Activated CD8-positive, alpha-beta T cell treated with anti-CD3 and anti-CD28 coated beads for 36 hours (primary cell): ENCODE measurements at regions of chrX and their contacts with region 1.

Region 1: GRCh38 chrX:19887911-19888879 is 795 bp upstream of the SH3KBP1 start:
- DNase-seq: peak; percentile 51
- ATAC-seq: peak; percentile 41
- H3K4me3 Mint-ChIP-seq: peak overlapping the region; percentile 71
- H3K27ac Mint-ChIP-seq: peak overlapping the region; percentile 83
- H3K4me1 Mint-ChIP-seq: peaks cover 40% of the 10 kb centered on the region
- H3K27me3 Mint-ChIP-seq: no peaks in the 10 kb centered on the region
- CTCF ChIP-seq: no peak

Region 2: DNA sequence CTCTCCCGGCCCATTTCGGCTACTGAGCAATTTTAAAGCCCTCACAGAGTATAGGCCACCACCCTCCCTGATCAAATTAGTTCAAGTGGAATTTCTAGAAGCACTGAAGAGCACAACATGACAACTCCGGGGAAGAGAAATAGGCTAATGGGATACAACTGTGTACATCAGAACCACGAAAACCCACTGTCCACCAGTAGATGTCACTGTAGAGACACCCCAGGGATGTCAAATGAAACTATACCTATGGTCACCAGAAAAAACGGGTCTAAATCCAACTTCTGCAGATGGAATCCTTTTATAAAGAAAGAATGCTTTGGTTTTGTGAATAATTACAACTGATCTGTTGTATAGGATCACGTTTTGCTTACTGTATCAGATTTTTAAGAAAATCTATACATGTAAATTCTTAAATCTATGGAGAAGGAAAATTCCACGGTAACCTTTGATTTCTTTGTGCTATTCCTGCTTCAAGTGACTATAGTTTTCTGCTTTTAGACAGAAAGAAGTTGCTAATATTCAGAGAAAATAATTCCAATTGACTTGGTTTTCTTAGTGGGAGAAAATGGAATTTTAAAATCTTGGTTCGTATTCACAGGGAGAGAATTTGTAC is 343.4 kb before region 1 on chrX:
- CTCF ChIA-PET with region 1: no interaction called
- POLR2A ChIA-PET with region 1: no interaction called
- intact Hi-C with region 1: loop called (anchors 10 kb)
- DNase-seq: peak; percentile 62
- ATAC-seq: peak; percentile 66
- H3K4me3 Mint-ChIP-seq: no peak overlapping the region
- H3K27ac Mint-ChIP-seq: peak overlapping the region; percentile 36
- H3K4me1 Mint-ChIP-seq: peaks cover 31% of the 10 kb centered on the region
- H3K27me3 Mint-ChIP-seq: no peaks in the 10 kb centered on the region
- CTCF ChIP-seq: peak; percentile 60

Region 3: DNA sequence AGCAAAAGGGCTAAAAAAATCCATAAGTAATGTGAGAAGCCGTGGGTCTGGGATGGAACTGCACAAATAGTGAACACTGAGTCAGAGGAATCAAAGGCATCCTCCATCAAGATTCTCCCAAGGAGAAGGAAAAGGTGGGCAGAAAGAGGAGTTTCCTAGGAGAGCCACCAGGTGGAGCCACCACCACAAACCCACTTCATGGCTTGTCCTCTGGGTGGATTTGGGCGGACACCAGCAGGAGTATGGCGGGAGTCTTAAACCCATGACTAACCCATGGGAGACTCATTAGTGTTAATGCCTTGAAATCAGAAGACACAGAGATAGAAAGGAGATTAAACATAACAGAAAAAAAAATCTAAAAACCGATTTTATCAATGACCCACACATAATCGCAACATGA is 148.5 kb before region 1 on chrX:
- CTCF ChIA-PET with region 1: interaction called, 4 read pairs
- POLR2A ChIA-PET with region 1: no interaction called
- intact Hi-C with region 1: loop called (anchors 5 kb)
- DNase-seq: peak; percentile 47
- ATAC-seq: peak; percentile 40
- H3K4me3 Mint-ChIP-seq: no peak overlapping the region
- H3K27ac Mint-ChIP-seq: peak overlapping the region; percentile 85
- H3K4me1 Mint-ChIP-seq: peaks cover 75% of the 10 kb centered on the region
- H3K27me3 Mint-ChIP-seq: no peaks in the 10 kb centered on the region
- CTCF ChIP-seq: peak; percentile 58

Region 4: DNA sequence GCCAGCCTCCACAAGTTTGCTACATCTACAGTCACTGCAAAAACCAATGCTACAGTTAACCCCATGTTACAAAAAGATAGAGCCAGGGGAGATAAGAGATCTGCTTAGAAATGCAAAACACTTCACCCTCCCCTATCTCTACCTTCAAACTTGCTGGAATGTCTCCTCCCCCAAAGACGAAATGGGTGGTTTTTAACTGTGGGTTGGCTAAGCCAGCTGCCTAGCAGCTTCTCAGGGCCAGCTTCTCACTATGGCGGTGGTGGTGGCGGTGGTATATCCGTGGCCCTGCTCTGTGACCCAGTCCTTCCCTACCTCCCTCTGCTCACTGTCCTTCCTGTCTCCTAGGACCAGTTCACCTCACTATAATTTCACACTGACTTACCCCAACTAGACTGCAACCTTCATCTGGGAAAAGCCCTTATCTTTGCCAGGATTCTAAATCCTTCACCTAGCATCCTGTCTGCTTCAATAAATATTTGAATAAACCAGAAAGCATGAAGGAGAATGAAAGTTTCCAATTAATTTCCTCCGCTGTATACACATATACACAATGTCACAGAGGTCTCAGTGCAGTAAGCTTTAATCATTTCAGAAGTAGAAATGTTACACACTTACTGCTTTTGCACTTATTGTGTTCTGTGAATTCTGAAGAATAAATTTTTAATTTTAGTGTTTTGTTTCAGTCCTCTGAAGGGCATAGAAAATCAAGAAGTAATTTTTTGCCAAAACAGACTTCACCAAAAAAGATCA is 47.1 kb before region 1 on chrX:
- CTCF ChIA-PET with region 1: interaction called, 3 read pairs
- POLR2A ChIA-PET with region 1: no interaction called
- intact Hi-C with region 1: loop called (anchors 5 kb)
- DNase-seq: peak; percentile 37
- ATAC-seq: peak; percentile 38
- H3K4me3 Mint-ChIP-seq: peak overlapping the region; percentile 47
- H3K27ac Mint-ChIP-seq: peak overlapping the region; percentile 90
- H3K4me1 Mint-ChIP-seq: peaks cover 70% of the 10 kb centered on the region
- H3K27me3 Mint-ChIP-seq: no peaks in the 10 kb centered on the region
- CTCF ChIP-seq: no peak

Region 5: GRCh38 chrX:19931146-19931545 is 43.0 kb after region 1 on chrX:
- CTCF ChIA-PET with region 1: no interaction called
- POLR2A ChIA-PET with region 1: no interaction called
- intact Hi-C with region 1: no loop called
- DNase-seq: no peak
- ATAC-seq: no peak
- H3K4me3 Mint-ChIP-seq: no peak overlapping the region
- H3K27ac Mint-ChIP-seq: no peak overlapping the region
- H3K4me1 Mint-ChIP-seq: no peaks in the 10 kb centered on the region
- H3K27me3 Mint-ChIP-seq: no peaks in the 10 kb centered on the region
- CTCF ChIP-seq: no peak

Region 6: GRCh38 chrX:20001588-20001987 is 113.4 kb after region 1 on chrX:
- CTCF ChIA-PET with region 1: no interaction called
- POLR2A ChIA-PET with region 1: no interaction called
- intact Hi-C with region 1: no loop called
- DNase-seq: no peak
- ATAC-seq: no peak
- H3K4me3 Mint-ChIP-seq: no peak overlapping the region
- H3K27ac Mint-ChIP-seq: no peak overlapping the region
- H3K4me1 Mint-ChIP-seq: no peaks in the 10 kb centered on the region
- H3K27me3 Mint-ChIP-seq: no peaks in the 10 kb centered on the region
- CTCF ChIP-seq: no peak

Region 7: DNA sequence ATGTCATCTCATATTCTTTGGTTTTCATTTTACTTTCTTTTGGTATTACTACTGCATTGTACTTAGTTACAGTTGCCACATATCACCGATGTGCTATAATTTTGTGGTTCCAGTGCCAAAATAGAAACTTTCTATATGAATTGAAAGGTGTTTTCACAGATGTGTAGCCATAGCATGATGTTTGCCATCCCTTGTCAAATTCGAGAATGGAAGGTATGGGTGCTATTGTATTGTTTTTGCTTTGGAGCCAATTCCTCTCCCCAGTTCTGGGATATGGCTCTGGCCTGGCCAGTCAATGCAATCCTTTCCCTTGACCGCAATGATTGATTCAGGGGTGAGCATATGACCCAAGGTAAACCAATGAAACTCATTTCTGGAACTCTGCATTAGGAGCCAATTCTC is 464.7 kb after region 1 on chrX:
- CTCF ChIA-PET with region 1: no interaction called
- POLR2A ChIA-PET with region 1: no interaction called
- intact Hi-C with region 1: no loop called
- DNase-seq: peak; percentile 2
- ATAC-seq: peak; percentile 73
- H3K4me3 Mint-ChIP-seq: no peak overlapping the region
- H3K27ac Mint-ChIP-seq: no peak overlapping the region
- H3K4me1 Mint-ChIP-seq: peaks cover 23% of the 10 kb centered on the region
- H3K27me3 Mint-ChIP-seq: no peaks in the 10 kb centered on the region
- CTCF ChIP-seq: no peak